AG04450 (cell line): ENCODE measurements at regions of chr2 and their contacts with region 1.

Region 1: DNA sequence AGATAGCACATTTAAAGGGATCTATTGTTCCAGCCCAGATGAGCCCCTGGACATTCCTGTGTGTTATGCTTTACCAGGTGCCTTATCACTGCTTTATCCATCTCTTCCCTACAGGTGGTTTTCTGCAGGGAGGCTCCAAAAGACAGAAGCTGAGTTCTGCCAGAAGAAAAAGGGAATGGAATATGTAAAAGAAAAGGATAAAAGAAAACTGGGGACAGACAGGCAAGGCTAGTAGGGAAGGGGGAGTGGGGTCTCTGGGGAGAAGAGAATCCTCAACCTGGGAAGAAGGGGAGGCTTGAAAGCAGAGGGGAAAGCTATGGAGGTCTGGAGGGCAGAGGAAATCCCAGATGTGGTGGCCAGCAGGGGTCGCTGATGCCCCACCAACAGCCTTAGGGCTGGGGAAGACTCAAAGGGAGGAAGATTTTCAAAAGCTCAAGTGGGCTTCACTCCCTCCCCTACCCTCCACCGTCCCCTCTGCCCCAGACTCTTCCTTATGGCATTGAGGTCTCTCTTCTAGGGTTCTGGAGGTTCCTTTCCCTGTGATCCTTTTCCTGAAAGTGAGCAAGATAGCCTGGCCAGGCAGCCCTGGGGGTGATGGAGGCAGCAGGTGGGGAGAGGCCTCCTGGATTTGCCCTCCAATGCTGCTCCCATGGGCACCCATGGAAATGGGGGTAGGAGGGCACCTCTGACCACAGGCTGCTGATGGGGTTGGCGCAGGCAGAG is 178.1 kb upstream of the PKDCC start:
- DNase-seq: peak; percentile 30
- H3K4me3 ChIP-seq: no peak overlapping the region
- H3K27ac ChIP-seq: no peak overlapping the region
- H3K27me3 ChIP-seq: no peaks in the 10 kb centered on the region
- CTCF ChIP-seq: peak; percentile 89

Region 2: DNA sequence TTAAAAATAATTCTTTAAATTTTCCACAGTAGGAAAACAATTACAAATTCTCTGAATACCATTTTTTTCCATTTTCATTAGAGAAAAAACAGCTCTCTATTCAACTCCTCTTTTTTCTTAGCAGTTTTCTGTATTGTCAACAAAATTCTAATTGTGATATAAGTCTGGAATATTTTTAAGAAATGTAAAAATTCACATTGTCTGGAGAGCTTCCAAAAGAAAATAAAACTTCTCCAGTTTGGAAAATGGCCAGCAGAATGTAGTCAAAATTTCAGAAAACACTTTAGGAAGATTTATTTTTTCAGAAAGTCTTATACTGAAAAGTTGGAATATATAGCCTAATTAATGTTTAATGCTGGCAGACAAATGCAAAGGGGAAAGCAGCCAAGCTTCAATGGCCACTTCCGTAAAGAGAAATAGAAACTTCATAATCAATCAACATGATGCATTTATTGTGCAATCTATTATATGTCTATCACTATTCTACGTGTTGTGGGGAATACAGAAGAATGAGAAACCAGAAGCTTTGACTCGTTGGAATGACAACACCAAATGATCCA is 555.1 kb before region 1 on chr2:
- CTCF ChIA-PET with region 1: no interaction called
- POLR2A ChIA-PET with region 1: no interaction called
- DNase-seq: no peak
- H3K4me3 ChIP-seq: no peak overlapping the region
- H3K27ac ChIP-seq: no peak overlapping the region
- H3K27me3 ChIP-seq: no peaks in the 10 kb centered on the region
- CTCF ChIP-seq: no peak

Region 3: DNA sequence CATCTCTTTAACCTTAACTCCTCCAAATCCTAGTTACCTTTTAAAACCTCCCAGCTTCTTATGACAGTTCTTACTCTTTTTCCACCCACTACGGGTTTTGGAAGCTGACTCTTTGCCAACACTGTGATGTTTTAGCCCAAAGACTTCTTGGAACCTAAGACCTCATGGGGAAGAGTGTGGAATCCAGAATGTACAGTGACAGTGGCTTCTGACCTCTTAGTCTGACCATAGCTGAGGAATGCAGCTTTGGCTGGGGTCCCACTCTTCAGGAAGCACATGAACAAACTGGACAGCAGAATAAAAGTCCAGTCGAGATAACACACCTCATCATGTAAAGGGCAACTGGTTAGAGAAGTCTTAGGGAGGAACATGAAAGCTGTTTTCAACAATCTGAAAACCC is 17.1 kb after region 1 on chr2:
- CTCF ChIA-PET with region 1: interaction called, 21 read pairs
- POLR2A ChIA-PET with region 1: no interaction called
- DNase-seq: no peak
- H3K4me3 ChIP-seq: no peak overlapping the region
- H3K27ac ChIP-seq: no peak overlapping the region
- H3K27me3 ChIP-seq: peaks cover 2% of the 10 kb centered on the region
- CTCF ChIP-seq: no peak

Region 4: DNA sequence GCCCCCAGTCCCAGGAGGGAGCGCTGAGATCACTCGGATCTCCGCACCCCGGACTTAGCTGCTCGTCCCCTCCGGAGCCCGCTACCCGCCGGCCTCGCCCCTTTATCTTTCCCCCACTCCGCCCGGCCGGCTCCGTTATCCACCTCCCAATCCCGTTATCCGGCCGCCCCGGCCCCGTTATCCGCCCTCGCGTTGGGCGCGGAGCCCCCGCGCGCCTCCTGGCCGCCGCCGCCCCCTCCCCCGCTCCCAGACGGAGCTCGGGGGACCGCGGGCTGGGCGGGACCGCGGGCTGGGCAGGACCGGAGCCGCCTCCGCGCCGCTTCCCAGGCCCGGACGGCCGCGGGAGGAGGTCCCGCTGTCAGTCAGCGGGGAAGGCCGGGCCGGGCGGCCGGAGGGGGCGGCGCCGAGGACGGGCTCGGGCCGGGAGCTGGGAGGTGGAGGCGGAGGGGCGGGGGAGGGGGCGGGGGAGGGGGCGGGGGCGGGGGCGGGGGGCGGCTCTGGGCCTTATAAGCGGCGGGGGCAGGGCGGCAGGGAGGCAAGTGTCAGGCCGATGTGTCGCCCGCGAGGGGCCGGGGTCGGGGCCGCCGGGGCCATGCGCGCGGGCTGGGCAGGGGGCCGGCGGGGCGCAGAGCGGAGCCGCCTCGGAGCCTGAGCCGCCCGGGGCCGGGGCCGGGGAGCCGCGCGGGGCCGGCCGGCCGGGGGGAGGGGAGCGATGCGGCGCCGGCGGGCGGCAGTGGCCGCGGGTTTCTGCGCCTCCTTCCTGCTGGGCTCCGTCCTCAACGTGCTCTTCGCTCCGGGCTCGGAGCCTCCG is 178.0 kb after region 1 on chr2 and contains the start of gene PKDCC:
- CTCF ChIA-PET with region 1: interaction called, 43 read pairs
- POLR2A ChIA-PET with region 1: interaction called, 15 read pairs
- DNase-seq: peak; percentile 37
- H3K4me3 ChIP-seq: peak within 1 kb of the TSS; percentile 93
- H3K27ac ChIP-seq: peak within 1 kb of the TSS; percentile 61
- H3K27me3 ChIP-seq: peaks cover 6% of the 10 kb centered on the region
- CTCF ChIP-seq: no peak
- polyA plus RNA-seq, gene PKDCC: 87.0 and 107 TPM in 2 replicates

Region 5: GRCh38 chr2:42053791-42054701 is 184.3 kb after region 1 on chr2:
- CTCF ChIA-PET with region 1: interaction called, 43 read pairs
- POLR2A ChIA-PET with region 1: interaction called, 15 read pairs
- DNase-seq: no peak
- H3K4me3 ChIP-seq: no peak overlapping the region
- H3K27ac ChIP-seq: peak overlapping the region; percentile 11
- H3K27me3 ChIP-seq: no peaks in the 10 kb centered on the region
- CTCF ChIP-seq: no peak

Region 6: DNA sequence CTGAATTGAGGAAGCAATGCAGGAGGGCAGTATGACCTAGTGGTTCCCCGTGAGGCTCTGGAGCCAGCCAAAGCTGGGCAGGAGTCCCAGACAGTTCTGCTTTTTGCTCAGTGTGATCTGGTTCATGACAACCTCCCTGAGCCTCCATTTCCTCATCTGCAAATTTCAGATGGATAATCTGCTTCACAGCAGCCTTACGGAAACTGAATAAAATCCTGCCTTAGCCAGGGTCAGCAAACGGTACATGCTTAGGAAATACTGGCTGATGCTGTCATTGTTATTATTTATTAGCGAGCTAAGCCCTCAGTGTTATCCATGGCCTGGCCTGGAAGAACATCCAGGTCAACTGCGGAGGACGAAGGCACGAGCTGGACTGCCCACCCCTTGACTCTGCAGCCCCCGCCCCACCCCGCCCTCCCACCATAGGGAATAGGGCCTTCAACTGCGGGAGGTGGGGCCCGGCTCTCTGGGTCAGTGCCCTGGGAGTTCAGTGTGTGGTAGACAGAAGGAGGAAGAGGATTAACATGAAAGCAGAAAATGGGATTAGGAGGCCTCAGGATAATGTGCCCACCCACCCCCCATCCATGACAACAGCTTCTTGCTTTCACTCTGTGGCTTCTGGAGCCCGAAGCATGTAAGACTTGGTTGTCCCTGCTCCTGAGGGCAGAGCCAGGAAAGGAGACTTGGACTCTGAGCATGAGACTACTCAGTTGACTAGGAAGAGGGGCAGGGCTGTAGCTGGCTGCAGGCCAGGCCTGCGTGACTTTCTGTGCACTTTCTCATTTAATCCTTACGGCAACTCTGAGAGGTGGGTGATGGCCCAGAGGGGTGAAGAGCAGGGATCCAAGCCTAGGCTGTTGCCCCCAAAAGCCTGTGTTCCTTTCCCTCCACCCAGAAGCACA is 191.3 kb after region 1 on chr2:
- CTCF ChIA-PET with region 1: interaction called, 17 read pairs
- POLR2A ChIA-PET with region 1: interaction called, 4 read pairs
- DNase-seq: no peak
- H3K4me3 ChIP-seq: no peak overlapping the region
- H3K27ac ChIP-seq: peak overlapping the region; percentile 21
- H3K27me3 ChIP-seq: no peaks in the 10 kb centered on the region
- CTCF ChIP-seq: no peak

Region 7: DNA sequence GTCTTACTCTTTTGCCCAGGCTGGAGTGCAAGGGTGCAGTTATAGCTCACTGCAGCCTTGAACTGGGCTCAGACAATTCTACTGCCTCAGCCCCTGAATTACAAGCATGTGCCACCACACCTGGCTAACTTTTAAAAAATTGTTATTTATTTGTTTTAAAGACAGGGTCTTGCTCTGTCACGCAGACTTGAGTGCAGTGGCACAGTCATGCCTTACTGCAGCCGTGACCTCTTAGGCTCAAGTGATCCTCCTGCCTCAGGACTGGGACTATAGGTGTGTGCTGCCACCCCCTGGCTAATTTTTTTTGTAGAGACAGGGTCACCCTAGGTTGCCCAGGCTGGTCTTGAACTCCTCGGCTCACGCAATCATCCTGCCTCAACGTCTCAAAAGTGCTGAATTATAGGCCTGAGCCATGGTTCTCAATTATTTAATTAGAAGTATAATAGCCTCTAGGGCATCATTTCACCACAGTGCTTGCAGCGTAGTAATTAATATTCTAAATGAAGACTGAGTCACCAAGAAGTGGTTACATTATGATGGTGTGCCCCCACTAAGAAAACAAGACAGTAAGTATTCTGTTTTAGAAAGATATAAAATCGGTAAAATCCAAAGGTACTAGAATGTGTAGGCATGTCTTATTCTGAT is 369.1 kb after region 1 on chr2:
- CTCF ChIA-PET with region 1: interaction called, 12 read pairs
- POLR2A ChIA-PET with region 1: no interaction called
- DNase-seq: no peak
- H3K4me3 ChIP-seq: no peak overlapping the region
- H3K27ac ChIP-seq: no peak overlapping the region
- H3K27me3 ChIP-seq: no peaks in the 10 kb centered on the region
- CTCF ChIP-seq: no peak